Panc1 (cell line): ENCODE measurements at regions of chr13 and their contacts with region 1.

Region 1: GRCh38 chr13:94660695-94661326 is 51.5 kb downstream of the SOX21 start:
- DNase-seq: no peak
- ATAC-seq: no peak
- H3K4me3 ChIP-seq: no peak overlapping the region
- H3K27ac ChIP-seq: no peak overlapping the region
- H3K4me1 ChIP-seq: no peaks in the 10 kb centered on the region
- H3K27me3 ChIP-seq: no peaks in the 10 kb centered on the region; the same call in 1 of the 2 replicates
- CTCF ChIP-seq: peak; percentile 35; the same call in 1 of the 2 replicates

Region 2: GRCh38 chr13:94431574-94431973 is 229.2 kb before region 1 on chr13:
- CTCF ChIA-PET with region 1: no interaction called
- POLR2A ChIA-PET with region 1: no interaction called
- in situ Hi-C with region 1: no loop called
- intact Hi-C with region 1: no loop called
- DNase-seq: no peak
- ATAC-seq: no peak
- H3K4me3 ChIP-seq: no peak overlapping the region
- H3K27ac ChIP-seq: no peak overlapping the region
- H3K4me1 ChIP-seq: no peaks in the 10 kb centered on the region
- H3K27me3 ChIP-seq: no peaks in the 10 kb centered on the region
- CTCF ChIP-seq: no peak

Region 3: GRCh38 chr13:94602467-94602866 is 58.3 kb before region 1 on chr13:
- CTCF ChIA-PET with region 1: no interaction called
- POLR2A ChIA-PET with region 1: interaction called, 16 read pairs
- in situ Hi-C with region 1: no loop called
- intact Hi-C with region 1: no loop called
- DNase-seq: no peak
- ATAC-seq: no peak
- H3K4me3 ChIP-seq: peak overlapping the region; percentile 72 to 90
- H3K27ac ChIP-seq: peak overlapping the region; percentile 90
- H3K4me1 ChIP-seq: peaks cover 9% of the 10 kb centered on the region; the same call in 1 of the 2 replicates
- H3K27me3 ChIP-seq: no peaks in the 10 kb centered on the region
- CTCF ChIP-seq: no peak